Caco-2 (cell line): ENCODE measurements at regions of chr20 and their contacts with region 1.

Region 1: GRCh38 chr20:15491575-15491974 is 1081.7 kb downstream of the KIF16B start:
- DNase-seq: peak in 1 of 2 experiments; percentile 44
- H3K4me3 ChIP-seq: no peak overlapping the region
- H3K4me3 Mint-ChIP-seq: no peak overlapping the region
- H3K27ac Mint-ChIP-seq: peak overlapping the region; percentile 45
- H3K4me1 ChIP-seq: peaks cover 42% of the 10 kb centered on the region
- H3K4me1 Mint-ChIP-seq: peaks cover 42% of the 10 kb centered on the region
- H3K27me3 ChIP-seq: no peaks in the 10 kb centered on the region
- H3K27me3 Mint-ChIP-seq: no peaks in the 10 kb centered on the region
- CTCF ChIP-seq: peak; percentile 33 to 63

Region 2: GRCh38 chr20:15359056-15359455 is 132.5 kb before region 1 on chr20:
- CTCF ChIA-PET with region 1: no interaction called
- POLR2A ChIA-PET with region 1: no interaction called
- intact Hi-C with region 1: no loop called
- DNase-seq: no peak
- H3K4me3 ChIP-seq: no peak overlapping the region
- H3K4me3 Mint-ChIP-seq: no peak overlapping the region
- H3K27ac Mint-ChIP-seq: no peak overlapping the region
- H3K4me1 ChIP-seq: no peaks in the 10 kb centered on the region
- H3K4me1 Mint-ChIP-seq: peaks cover 1% of the 10 kb centered on the region
- H3K27me3 ChIP-seq: no peaks in the 10 kb centered on the region
- H3K27me3 Mint-ChIP-seq: no peaks in the 10 kb centered on the region
- CTCF ChIP-seq: no peak

Region 3: DNA sequence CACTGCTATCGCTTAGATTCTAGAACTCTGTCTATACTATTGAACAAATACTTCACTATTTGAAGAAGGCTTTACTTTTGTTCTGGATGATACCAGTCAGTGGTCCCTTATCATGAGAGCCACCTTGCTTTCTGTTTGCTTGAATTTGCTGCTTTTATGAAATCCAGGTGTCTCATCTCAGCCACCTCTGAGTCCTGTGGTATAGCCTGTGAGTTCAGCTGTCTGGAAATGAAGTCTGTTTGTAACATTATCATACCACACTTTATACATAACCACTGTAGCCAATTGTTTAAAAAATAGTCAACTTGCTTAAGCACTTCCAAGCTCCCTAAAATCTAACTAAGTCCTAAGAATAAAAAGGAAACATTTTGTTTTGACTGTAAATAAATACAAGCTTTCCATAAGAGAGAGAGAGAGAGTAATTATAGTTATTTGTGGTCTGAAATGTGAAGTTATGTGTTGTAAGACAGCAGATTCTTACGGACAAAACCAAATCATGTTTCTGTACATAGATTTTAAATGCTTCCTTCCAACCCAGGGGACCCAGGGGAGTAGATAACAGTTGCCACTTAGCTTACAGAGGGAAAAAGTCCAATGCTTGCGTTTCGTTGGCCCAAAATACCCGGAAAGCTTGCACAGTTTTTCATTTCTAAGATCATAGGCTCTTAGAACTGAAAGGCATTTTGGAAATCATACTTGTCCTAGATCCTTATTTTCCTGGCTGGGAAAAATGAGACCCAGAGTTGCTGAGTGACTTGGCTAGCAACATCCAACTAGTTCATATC is 46.3 kb before region 1 on chr20:
- CTCF ChIA-PET with region 1: no interaction called
- POLR2A ChIA-PET with region 1: no interaction called
- intact Hi-C with region 1: loop called (anchors 1 kb)
- DNase-seq: peak; percentile 44 to 48
- H3K4me3 ChIP-seq: no peak overlapping the region
- H3K4me3 Mint-ChIP-seq: no peak overlapping the region
- H3K27ac Mint-ChIP-seq: no peak overlapping the region
- H3K4me1 ChIP-seq: peaks cover 26% of the 10 kb centered on the region
- H3K4me1 Mint-ChIP-seq: peaks cover 30% of the 10 kb centered on the region
- H3K27me3 ChIP-seq: no peaks in the 10 kb centered on the region
- H3K27me3 Mint-ChIP-seq: no peaks in the 10 kb centered on the region
- CTCF ChIP-seq: no peak

Region 4: DNA sequence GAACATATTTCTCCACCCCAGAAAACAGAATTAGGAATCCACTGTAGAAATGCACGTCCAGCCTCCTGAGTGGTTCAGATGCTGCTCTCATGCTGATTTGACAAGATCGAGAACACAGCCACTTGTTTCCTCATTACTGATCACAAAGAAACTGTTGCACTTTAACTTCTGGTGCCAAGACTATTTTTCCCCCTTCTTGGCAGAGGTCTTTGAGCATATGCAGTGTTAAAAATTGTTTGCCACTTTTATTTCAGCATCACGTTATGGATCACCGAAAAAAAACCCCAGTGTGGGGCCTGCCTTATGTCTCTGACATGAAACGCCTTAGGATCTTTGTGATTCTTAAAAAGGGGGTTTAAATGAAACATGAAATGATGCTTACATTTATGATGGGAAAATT is 14.7 kb after region 1 on chr20:
- CTCF ChIA-PET with region 1: no interaction called
- POLR2A ChIA-PET with region 1: no interaction called
- intact Hi-C with region 1: no loop called
- DNase-seq: no peak
- H3K4me3 ChIP-seq: no peak overlapping the region
- H3K4me3 Mint-ChIP-seq: no peak overlapping the region
- H3K27ac Mint-ChIP-seq: no peak overlapping the region
- H3K4me1 ChIP-seq: peaks cover under 1% of the 10 kb centered on the region; the same call in 1 of the 2 replicates
- H3K4me1 Mint-ChIP-seq: peaks cover 7% of the 10 kb centered on the region
- H3K27me3 ChIP-seq: no peaks in the 10 kb centered on the region
- H3K27me3 Mint-ChIP-seq: no peaks in the 10 kb centered on the region
- CTCF ChIP-seq: no peak

Region 5: GRCh38 chr20:15654208-15654645 is 162.7 kb after region 1 on chr20:
- CTCF ChIA-PET with region 1: interaction called, 8 read pairs
- POLR2A ChIA-PET with region 1: no interaction called
- intact Hi-C with region 1: loop called (anchors 1 kb)
- DNase-seq: peak; percentile 76 to 79
- H3K4me3 ChIP-seq: no peak overlapping the region
- H3K4me3 Mint-ChIP-seq: no peak overlapping the region
- H3K27ac Mint-ChIP-seq: peak overlapping the region; percentile 24
- H3K4me1 ChIP-seq: peaks cover 30% of the 10 kb centered on the region
- H3K4me1 Mint-ChIP-seq: peaks cover 18% of the 10 kb centered on the region
- H3K27me3 ChIP-seq: no peaks in the 10 kb centered on the region
- H3K27me3 Mint-ChIP-seq: no peaks in the 10 kb centered on the region
- CTCF ChIP-seq: peak; percentile 67 to 78

Region 6: DNA sequence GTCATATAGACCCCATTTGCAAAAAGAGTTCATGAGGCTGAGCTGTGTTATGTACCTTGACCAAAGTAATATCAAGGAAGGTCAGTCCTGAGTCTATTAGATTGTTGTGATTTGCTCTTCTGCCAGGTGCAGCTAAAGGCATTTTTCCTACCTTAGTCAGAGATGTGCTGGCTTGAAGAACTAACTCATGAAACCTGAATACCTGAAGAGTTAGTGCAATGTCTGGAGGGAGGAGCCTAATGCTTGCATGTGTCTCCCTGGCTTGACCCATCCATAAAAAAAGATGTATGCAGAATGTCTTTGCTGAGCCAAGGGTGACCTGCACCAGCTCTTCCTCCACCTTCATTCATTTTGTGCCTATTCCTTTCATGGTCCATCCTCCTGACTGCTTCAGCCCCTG is 339.6 kb after region 1 on chr20:
- CTCF ChIA-PET with region 1: no interaction called
- POLR2A ChIA-PET with region 1: no interaction called
- intact Hi-C with region 1: no loop called
- DNase-seq: no peak
- H3K4me3 ChIP-seq: no peak overlapping the region
- H3K4me3 Mint-ChIP-seq: no peak overlapping the region
- H3K27ac Mint-ChIP-seq: no peak overlapping the region
- H3K4me1 ChIP-seq: no peaks in the 10 kb centered on the region
- H3K4me1 Mint-ChIP-seq: peaks cover 6% of the 10 kb centered on the region
- H3K27me3 ChIP-seq: no peaks in the 10 kb centered on the region; the same call in 1 of the 2 replicates
- H3K27me3 Mint-ChIP-seq: peaks cover 3% of the 10 kb centered on the region
- CTCF ChIP-seq: no peak

Region 7: DNA sequence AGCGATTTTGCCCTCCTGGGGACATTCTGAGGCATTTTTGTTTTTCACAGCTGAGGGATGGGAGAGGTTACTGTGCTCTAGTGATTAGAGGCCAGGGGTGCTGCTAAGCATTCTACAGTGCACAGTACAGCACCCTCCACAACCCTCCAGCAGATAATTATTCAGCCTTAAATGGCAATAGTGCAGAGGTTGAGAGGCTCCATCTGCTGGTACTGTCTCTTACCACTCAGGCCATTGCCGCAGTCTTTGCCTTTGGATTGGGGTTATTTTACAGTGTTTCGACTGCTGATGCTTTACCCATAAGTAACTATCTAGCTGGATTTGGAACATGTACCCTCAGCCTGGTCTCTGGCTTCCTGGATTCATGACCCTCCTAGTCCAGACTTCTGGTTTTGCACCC is 376.3 kb after region 1 on chr20:
- CTCF ChIA-PET with region 1: no interaction called
- POLR2A ChIA-PET with region 1: no interaction called
- intact Hi-C with region 1: loop called (anchors 1 kb)
- DNase-seq: peak in 1 of 2 experiments; percentile 17
- H3K4me3 ChIP-seq: no peak overlapping the region
- H3K4me3 Mint-ChIP-seq: no peak overlapping the region
- H3K27ac Mint-ChIP-seq: no peak overlapping the region
- H3K4me1 ChIP-seq: no peaks in the 10 kb centered on the region
- H3K4me1 Mint-ChIP-seq: no peaks in the 10 kb centered on the region
- H3K27me3 ChIP-seq: no peaks in the 10 kb centered on the region
- H3K27me3 Mint-ChIP-seq: no peaks in the 10 kb centered on the region
- CTCF ChIP-seq: peak in 1 of 2 experiments; percentile 53

Region 8: DNA sequence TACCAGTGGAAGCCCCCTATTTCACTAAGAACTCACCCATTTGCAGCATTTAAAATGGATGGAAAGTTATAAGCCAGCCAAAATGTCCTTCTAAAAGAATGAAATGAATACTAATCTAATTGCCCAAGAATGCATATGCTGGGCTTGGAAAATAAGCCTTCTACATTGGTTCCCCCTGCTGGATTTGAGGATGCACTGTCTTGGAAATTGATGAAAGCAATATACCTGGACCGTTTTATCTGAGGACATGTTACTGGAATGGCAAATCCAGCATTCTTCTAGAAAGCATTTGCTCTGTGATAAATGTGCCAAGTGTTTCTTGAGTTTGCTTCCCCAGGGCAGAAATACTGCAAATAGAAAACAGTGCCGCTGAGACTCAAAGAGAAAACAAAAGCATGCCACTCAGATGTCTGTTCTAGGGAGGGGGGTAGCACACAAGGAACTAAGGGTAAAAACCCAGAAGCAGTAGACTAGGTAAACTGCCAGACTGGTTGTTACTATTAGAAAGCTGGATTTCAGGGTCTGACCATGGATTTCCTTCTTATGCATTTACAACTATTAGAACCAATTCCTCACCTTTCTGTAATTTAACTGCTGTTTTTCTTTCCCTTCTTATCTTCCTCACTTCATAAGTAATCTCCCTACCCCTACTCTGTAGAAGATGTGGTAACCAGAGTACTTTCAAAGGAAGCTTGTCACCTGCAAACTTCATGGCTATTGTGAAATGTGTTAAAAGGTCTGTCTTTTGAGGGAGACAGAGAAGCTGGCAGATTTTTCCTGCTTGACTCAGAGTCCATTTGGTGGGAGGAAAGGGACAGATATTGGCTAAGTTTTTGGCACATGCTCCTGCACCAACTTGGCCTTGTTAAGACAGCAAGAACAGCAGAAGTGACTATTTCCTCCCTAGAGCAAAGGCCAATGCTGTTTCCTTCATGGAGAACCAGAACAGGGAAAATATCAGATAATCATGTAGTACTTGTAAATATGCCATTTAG is 439.0 kb after region 1 on chr20:
- CTCF ChIA-PET with region 1: no interaction called
- POLR2A ChIA-PET with region 1: no interaction called
- intact Hi-C with region 1: loop called (anchors 2 kb)
- DNase-seq: peak in 1 of 2 experiments; percentile 43
- H3K4me3 ChIP-seq: no peak overlapping the region
- H3K4me3 Mint-ChIP-seq: no peak overlapping the region
- H3K27ac Mint-ChIP-seq: no peak overlapping the region
- H3K4me1 ChIP-seq: no peaks in the 10 kb centered on the region
- H3K4me1 Mint-ChIP-seq: peaks cover 7% of the 10 kb centered on the region
- H3K27me3 ChIP-seq: no peaks in the 10 kb centered on the region
- H3K27me3 Mint-ChIP-seq: no peaks in the 10 kb centered on the region
- CTCF ChIP-seq: peak; percentile 53 to 67